Transverse colon (tissue), 4 donors: ENCODE measurements at regions of chr10 and their contacts with region 1.

Region 1: GRCh38 chr10:26556748-26557640 is 118.9 kb downstream of the APBB1IP start:
- DNase-seq: no peak
- H3K4me3 ChIP-seq: no peak overlapping the region
- H3K27ac ChIP-seq: no peak overlapping the region
- H3K4me1 ChIP-seq: peaks cover 0 to 20% (median 0%) of the 10 kb centered on the region in 4 donors
- H3K27me3 ChIP-seq: peaks cover 9% of the 10 kb centered on the region
- CTCF ChIP-seq: peak; percentile 60 to 70 (median 68)
- EP300 ChIP-seq: no peak
- POLR2A ChIP-seq: no peak

Region 2: DNA sequence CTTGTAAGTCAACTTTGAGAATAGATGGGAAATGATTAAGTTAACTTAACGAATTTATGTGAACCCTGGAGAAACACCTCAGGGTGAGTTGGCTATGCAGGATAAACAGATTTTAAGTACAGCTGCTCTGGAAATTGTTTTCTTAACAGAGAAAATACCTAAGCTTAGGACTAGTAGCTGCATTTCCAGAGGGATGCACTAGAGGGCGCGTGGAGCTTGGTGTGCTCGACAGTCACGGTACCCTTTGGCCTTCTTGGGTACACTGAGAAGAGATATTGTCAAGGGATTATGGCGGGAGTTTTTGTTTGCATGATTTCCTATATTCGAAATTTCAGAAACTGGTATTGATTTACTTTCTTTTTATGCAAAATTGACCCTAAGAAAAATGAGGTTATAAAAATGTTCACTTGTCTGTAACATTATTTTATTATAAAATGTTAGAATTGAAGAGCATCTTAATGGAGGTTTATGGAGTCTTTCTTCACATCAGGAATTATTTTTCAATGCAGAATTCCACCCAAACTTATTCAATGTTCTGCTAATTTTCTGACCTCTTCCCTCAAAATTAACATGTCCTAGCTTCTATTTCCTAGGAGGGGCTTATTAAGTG is 681.3 kb before region 1 on chr10:
- in situ Hi-C with region 1: loop called in 1 of 4 experiments (anchors 25 kb)
- intact Hi-C with region 1: loop called (anchors 10 kb)
- DNase-seq: peak; percentile 75
- H3K4me3 ChIP-seq: no peak overlapping the region
- H3K27ac ChIP-seq: no peak overlapping the region
- H3K4me1 ChIP-seq: no peaks in the 10 kb centered on the region
- H3K27me3 ChIP-seq: no peaks in the 10 kb centered on the region
- CTCF ChIP-seq: peak; percentile 63 to 84 (median 78)
- EP300 ChIP-seq: no peak
- POLR2A ChIP-seq: no peak

Region 3: GRCh38 chr10:26334932-26335573 is 221.9 kb before region 1 on chr10:
- in situ Hi-C with region 1: loop called in 3 of 4 experiments (anchors 10 to 25 kb)
- intact Hi-C with region 1: loop called (anchors 5 kb)
- DNase-seq: peak; percentile 44
- H3K4me3 ChIP-seq: peak overlapping the region in 1 of 4 donors; percentile 13
- H3K27ac ChIP-seq: no peak overlapping the region
- H3K4me1 ChIP-seq: no peaks in the 10 kb centered on the region
- H3K27me3 ChIP-seq: no peaks in the 10 kb centered on the region
- CTCF ChIP-seq: peak; percentile 64 to 80 (median 66)
- EP300 ChIP-seq: no peak
- POLR2A ChIP-seq: no peak

Region 4: DNA sequence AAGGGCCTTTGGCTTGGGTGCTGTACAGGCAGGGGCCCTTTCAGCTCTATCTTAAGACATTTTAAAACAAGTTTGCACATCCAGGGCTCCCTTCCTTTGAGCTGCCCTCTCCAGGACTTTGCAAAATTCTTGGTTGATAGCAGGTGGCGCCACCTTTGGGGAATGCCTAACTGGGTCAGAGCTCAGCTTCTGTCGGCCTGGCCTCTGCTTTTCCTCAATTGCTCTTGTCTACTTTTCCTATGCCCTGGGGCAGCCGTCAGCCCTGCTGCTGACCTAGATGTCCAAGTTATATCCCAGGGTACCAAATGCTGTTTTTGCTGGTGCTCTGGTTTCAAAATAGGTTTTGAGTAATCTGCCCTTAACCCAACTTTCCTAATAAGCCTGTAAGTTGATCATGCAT is 53.1 kb before region 1 on chr10:
- in situ Hi-C with region 1: no loop called
- intact Hi-C with region 1: no loop called
- DNase-seq: no peak
- H3K4me3 ChIP-seq: no peak overlapping the region
- H3K27ac ChIP-seq: no peak overlapping the region
- H3K4me1 ChIP-seq: no peaks in the 10 kb centered on the region
- H3K27me3 ChIP-seq: no peaks in the 10 kb centered on the region
- CTCF ChIP-seq: no peak
- EP300 ChIP-seq: no peak
- POLR2A ChIP-seq: no peak

Region 5: DNA sequence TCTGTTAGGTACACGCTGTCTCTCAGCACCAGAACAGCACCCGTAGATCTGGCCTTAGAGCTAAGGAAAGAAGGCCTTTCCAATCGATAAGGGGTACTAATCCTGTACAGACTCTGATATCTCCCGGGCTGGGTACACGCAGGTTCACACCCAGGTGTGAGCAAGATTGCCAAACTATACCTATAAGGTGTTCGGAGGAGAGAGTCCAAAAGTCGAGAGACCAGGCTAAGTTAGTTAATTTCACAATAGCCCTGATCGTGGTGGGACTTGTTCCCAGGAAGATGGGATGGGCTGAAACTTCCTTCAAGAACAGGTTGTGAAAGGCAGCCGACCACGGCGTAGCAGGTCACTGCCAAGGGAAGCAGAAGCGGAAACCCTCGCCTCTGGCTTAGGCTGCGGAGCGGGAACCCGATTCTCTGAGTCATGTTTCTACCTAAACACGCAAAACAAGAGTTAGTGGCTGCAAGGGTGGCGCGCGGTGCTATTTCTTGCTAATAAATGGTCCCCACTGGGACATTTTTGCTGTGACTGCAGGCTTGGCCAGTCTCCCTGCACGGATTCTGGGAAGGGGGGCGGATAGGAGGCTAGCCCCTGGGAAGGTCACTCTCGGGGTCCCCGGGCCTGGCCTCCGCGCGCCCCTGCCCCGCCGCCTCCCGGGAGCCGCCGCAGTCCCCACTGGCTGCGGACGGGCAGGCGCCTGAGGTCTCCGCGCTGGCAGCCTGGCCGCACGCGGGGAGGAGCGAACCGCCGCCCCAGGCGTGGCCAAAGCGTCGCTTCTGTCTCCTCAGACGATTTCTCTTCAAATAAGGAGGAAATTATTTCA is 65.1 kb after region 1 on chr10:
- in situ Hi-C with region 1: no loop called
- intact Hi-C with region 1: no loop called
- DNase-seq: peak; percentile 67
- H3K4me3 ChIP-seq: peak overlapping the region; percentile 21 to 54 (median 40)
- H3K27ac ChIP-seq: peak overlapping the region; percentile 74 to 84 (median 80)
- H3K4me1 ChIP-seq: peaks cover 0 to 10% (median 2%) of the 10 kb centered on the region in 4 donors
- H3K27me3 ChIP-seq: peaks cover 17% of the 10 kb centered on the region
- CTCF ChIP-seq: no peak
- EP300 ChIP-seq: no peak
- POLR2A ChIP-seq: peak; percentile 30

Region 6: DNA sequence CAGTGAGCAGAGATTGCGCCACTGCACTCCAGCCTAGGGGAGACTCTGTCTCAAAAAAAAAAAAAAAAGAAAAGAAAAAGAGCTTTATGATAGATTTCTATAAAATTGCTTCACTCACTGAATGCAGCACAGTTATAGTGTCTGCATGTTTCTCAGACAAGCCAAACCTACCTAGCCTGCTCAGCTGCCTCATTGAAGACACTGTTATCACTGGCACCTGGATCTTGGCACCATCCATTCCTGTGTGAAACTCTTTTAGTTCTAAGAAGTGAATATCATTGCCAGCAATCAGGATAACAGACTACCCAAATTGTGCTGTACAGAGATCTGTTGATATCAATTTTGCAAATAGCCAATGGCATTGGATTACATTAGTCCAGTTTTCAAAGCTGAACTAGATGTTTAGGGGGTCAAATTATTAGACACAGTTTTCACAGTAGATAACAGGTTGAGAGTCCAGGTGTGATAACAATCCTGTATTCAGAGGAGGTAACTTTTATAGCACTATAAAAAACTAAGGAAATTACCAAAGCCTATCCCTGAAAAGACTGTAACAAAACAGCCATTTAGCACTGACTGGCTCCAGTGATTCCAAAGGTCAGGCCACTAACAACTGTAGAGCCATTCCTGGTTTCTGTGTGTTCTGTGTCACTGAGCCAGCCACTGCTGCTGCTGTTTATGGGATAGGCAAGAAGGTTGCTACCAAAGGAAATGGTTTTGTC is 157.6 kb after region 1 on chr10:
- in situ Hi-C with region 1: no loop called
- intact Hi-C with region 1: no loop called
- DNase-seq: peak; percentile 80
- H3K4me3 ChIP-seq: no peak overlapping the region
- H3K27ac ChIP-seq: peak overlapping the region; percentile 79 to 85 (median 84)
- H3K4me1 ChIP-seq: peaks cover 3 to 35% (median 17%) of the 10 kb centered on the region in 4 donors
- H3K27me3 ChIP-seq: no peaks in the 10 kb centered on the region
- CTCF ChIP-seq: no peak
- EP300 ChIP-seq: peak; percentile 12
- POLR2A ChIP-seq: no peak